Dorsolateral prefrontal cortex (tissue), 120 donors: ENCODE measurements at regions of chr2 and their contacts with region 1.

Region 1: GRCh38 chr2:34892766-34893165 is 1293.7 kb upstream of the FAM98A start:
- DNase-seq: peak in 2 of 10 donors; percentile 35 to 68
- H3K4me3 ChIP-seq: peak overlapping the region in 2 of 59 donors; percentile 3 to 14
- H3K27ac ChIP-seq: peak overlapping the region in 3 of 59 donors; percentile 9 to 61 (median 19)
- H3K27me3 ChIP-seq: no peaks in the 10 kb centered on the region
- CTCF ChIP-seq: no peak

Region 2: DNA sequence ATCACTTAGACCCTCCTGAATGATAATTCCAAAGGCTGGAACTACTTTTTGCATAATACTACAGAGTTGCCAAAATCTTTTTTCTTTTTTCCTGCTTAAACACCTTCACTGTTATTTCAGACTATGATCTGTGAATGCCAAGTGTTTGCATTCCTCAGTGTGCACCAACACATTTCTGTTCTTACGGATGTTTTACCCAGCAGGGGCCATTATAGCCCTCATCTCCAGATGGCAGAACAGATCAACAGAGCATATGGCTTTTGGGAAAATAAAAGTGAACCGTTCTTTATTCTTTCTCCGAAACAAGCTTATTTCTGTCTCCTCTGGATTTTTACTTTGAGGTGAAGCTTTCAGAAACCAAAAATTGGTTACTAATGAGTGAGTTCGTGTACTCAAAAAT is 67.1 kb before region 1 on chr2:
- intact Hi-C with region 1: no loop called
- DNase-seq: peak in 1 of 10 donors; percentile 50
- H3K4me3 ChIP-seq: no peak overlapping the region
- H3K27ac ChIP-seq: peak overlapping the region in 1 of 59 donors; percentile 14
- H3K27me3 ChIP-seq: no peaks in the 10 kb centered on the region
- CTCF ChIP-seq: no peak

Region 3: DNA sequence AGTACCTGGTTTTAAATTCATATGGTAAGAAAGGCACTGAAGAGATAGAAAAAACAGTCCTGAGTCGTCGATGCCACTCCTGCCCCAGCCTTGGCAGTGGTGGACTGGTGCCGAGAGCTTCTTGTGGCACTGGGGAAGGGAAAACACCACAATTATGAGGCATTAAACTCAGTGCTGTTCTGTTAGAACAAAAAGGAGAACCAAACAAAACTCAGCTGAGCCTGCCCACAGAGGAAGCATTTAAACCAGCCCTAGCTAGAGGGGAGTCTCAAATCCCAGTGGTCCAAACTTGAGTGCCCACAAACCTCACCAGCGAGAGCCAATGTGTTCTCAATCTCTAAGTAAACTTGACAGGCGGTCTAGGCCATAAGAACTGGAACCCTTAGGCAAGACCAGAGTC is 39.1 kb before region 1 on chr2:
- intact Hi-C with region 1: loop called in 1 of 2 experiments (anchors 2 kb)
- DNase-seq: no peak
- H3K4me3 ChIP-seq: no peak overlapping the region
- H3K27ac ChIP-seq: no peak overlapping the region
- H3K27me3 ChIP-seq: no peaks in the 10 kb centered on the region
- CTCF ChIP-seq: no peak

Region 4: DNA sequence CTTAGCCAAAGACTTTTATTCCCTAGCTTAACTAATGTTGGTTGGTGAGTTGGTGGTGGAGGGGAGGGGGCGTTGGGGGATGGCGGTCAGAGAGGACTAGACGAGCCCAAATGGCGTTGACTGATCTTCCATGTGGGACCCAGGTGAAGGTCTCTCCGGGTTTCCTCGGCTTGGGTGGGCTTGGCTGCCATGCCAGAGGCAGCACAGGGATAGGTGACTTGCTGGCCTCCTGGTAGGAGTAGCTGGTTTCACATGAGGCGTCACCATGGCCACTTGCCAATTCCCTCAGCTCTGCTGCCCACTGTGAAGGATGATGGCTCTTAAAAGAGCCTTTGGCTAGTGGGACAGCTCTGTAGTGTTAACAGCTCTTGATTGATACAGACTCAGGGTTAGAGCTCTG is 43.3 kb after region 1 on chr2:
- intact Hi-C with region 1: no loop called
- DNase-seq: no peak
- H3K4me3 ChIP-seq: no peak overlapping the region
- H3K27ac ChIP-seq: no peak overlapping the region
- H3K27me3 ChIP-seq: no peaks in the 10 kb centered on the region
- CTCF ChIP-seq: no peak